IMR-90 (cell line): ENCODE measurements at regions of chr3 and their contacts with region 1.

Region 1: DNA sequence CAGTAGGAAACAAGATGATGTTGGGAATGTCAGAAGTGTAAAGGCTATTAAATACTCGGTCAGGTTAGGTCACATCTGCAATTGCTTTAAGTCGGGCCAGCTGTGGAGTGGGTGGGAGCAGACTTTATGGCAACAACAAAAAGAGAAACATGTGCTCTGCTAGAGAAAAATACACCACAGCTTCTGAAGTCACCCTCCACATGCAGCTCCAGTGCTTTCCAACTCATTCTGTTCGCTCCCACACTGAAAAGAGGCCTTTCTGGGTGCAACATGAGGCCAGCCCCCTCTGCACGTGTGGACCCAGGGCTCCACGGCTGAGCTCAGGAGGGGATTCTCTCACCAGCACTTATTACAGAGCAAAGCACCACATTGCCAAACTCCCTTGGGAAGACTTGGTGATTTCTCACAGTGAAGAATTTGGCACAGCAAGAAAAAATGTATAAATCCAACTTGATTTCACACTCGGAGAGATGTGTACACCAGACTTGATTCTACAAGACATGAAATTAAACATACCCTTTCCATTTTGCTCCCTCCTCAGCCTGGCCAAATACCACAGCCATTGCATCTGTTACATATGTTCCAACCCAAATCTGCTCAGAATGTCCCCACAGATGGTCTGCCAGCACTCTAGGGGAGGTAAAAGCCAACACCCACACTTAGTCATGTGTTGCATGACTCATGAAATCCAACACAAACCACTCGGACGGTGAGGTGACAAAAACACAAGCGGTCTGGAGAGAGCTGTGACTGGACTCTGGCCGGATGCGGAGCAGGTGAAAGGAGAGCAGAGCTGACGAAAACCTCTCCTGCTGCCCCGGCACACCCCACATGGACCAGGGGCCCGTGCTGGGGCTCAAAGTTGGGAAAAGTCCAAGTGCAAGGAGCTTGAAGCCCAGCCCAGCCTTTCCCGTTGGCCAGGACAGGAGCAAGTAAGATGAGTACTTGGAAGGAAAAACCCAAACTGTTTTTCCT is 74.6 kb downstream of the ITGB5 start:
- DNase-seq: peak; percentile 99
- ATAC-seq: peak; percentile 86
- H3K4me3 ChIP-seq: no peak overlapping the region
- H3K27ac ChIP-seq: peak overlapping the region; percentile 77
- H3K4me1 ChIP-seq: peaks cover 16% of the 10 kb centered on the region
- H3K27me3 ChIP-seq: no peaks in the 10 kb centered on the region
- CTCF ChIP-seq: no peak
- POLR2A ChIP-seq: no peak
- RAD21 ChIP-seq: peak; percentile 26; the same call in 1 of the 2 replicates

Region 2: GRCh38 chr3:124772081-124772831 is 40.3 kb before region 1 on chr3:
- CTCF ChIA-PET with region 1: no interaction called
- POLR2A ChIA-PET with region 1: no interaction called
- dilution Hi-C with region 1: no loop called
- in situ Hi-C with region 1: no loop called
- intact Hi-C with region 1: loop called (anchors 5 kb)
- DNase-seq: peak; percentile 70
- ATAC-seq: peak; percentile 50
- H3K4me3 ChIP-seq: no peak overlapping the region
- H3K27ac ChIP-seq: peak overlapping the region; percentile 6; the same call in 1 of the 2 replicates
- H3K4me1 ChIP-seq: peaks cover 20% of the 10 kb centered on the region
- H3K27me3 ChIP-seq: no peaks in the 10 kb centered on the region
- CTCF ChIP-seq: no peak
- POLR2A ChIP-seq: no peak
- RAD21 ChIP-seq: no peak

Region 3: DNA sequence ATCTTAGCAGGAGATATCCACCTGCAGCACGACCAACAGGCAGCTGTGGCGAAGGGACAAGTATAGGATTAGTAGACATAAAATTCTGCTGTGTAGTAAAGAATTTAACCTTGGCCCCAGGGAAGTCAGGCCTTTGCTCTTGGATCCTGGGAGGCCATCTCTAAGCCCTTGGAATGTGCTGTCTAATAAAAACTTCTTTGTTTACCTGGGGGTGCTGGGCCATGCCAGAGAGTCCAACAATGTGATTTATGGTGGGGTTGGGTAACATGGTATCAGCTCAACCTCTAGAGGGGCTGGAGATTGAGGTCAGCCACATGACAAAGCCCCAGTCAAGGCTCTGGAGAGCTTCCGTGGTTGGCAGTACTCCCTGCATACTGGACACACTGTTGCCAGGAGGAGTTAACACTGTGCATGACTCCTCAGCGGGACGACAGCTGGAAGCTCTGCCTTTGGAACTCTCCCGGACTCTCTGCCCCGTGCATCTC is 190.8 kb after region 1 on chr3:
- CTCF ChIA-PET with region 1: no interaction called
- POLR2A ChIA-PET with region 1: no interaction called
- dilution Hi-C with region 1: no loop called
- in situ Hi-C with region 1: no loop called
- intact Hi-C with region 1: no loop called
- DNase-seq: peak; percentile 72
- ATAC-seq: peak; percentile 74
- H3K4me3 ChIP-seq: no peak overlapping the region
- H3K27ac ChIP-seq: no peak overlapping the region
- H3K4me1 ChIP-seq: peaks cover 14% of the 10 kb centered on the region
- H3K27me3 ChIP-seq: no peaks in the 10 kb centered on the region
- CTCF ChIP-seq: no peak
- POLR2A ChIP-seq: no peak
- RAD21 ChIP-seq: no peak